Left lung (tissue), 14 donors: ENCODE measurements at regions of chr5 and their contacts with region 1.

Region 1: GRCh38 chr5:151002250-151002649 is 18.1 kb upstream of the GPX3 start:
- DNase-seq: peak in 1 of 4 donors; percentile 67
- ATAC-seq: peak; percentile 33
- H3K4me3 ChIP-seq: no peak overlapping the region
- H3K27ac ChIP-seq: no peak overlapping the region
- H3K4me1 ChIP-seq: peaks cover 18 to 28% of the 10 kb centered on the region in 2 donors
- H3K27me3 ChIP-seq: no peaks in the 10 kb centered on the region
- CTCF ChIP-seq: peak in 1 of 2 donors; percentile 36

Region 2: DNA sequence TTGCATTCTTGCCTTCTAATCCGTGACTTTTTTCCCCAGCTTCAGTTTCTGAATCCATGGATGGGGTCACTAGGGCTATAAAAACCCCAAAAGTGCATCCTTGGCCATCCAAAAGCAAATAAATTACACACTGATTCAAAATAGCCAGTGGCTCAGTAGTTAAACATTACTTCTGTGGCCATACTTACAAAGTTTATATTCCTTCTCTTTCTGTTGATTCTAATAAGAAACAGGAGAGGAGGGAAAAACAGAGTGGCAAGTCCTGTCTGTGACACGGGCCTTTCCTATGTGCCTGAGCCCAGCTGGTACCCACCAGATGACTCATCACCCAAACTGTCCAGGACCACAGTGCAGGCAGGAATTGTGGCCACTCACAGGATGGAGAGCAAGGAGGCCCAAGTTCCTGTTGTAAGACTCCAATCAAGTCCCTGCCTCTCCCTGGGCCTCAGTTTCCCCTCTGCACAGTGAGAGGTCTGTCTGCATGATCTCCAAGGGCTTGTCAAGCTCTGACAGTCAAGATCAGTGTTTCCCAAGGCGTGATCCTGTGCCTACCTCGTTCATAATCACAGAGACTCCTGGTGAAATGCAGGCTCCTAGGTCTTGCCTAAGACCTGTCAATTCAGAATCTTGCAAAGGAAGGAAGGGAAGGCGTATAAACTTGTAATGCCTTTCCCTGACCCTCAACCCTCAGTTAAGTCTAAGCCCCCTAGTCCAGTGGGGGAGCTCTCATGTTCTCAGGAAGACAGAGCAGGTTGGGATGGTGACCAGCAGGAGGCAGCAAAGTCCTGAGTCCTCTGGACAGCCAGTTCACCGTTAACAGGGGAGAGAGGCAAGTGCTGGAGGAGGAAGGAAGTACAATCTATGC is 49.0 kb after region 1 on chr5:
- intact Hi-C with region 1: loop called in 1 of 2 experiments (anchors 5 kb)
- DNase-seq: peak; percentile 59 to 85 (median 83)
- ATAC-seq: peak; percentile 95
- H3K4me3 ChIP-seq: no peak overlapping the region
- H3K27ac ChIP-seq: peak overlapping the region in 1 of 2 donors; percentile 73
- H3K4me1 ChIP-seq: peaks cover 3 to 51% of the 10 kb centered on the region in 2 donors
- H3K27me3 ChIP-seq: no peaks in the 10 kb centered on the region
- CTCF ChIP-seq: peak; percentile 84 to 85

Region 3: GRCh38 chr5:151110122-151110681 is 108.0 kb after region 1 on chr5:
- intact Hi-C with region 1: loop called in 1 of 2 experiments (anchors 5 kb)
- DNase-seq: no peak
- ATAC-seq: no peak
- H3K4me3 ChIP-seq: no peak overlapping the region
- H3K27ac ChIP-seq: no peak overlapping the region
- H3K4me1 ChIP-seq: peaks cover 0 to 27% of the 10 kb centered on the region in 2 donors
- H3K27me3 ChIP-seq: no peaks in the 10 kb centered on the region
- CTCF ChIP-seq: no peak